Endothelial cell of umbilical vein (primary cell): ENCODE measurements at regions of chr14 and their contacts with region 1.

Region 1: DNA sequence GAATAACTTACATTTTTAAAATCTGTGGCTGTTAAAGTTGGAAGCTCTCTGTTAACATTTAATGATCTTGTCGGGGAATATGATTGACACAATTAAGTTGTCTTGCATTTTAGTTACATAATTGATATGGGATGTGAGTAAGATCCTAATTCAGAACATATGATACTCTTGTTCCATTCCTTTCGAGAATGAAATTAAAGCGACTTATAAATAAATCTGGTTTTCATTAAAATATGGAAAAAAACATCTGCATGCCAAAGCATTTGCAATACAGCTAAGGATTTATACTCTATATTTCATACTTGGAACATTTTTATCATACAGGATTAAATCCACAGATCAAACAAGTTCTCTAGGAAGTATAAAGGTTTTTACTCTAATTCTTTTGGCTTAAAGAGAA is 52.0 kb downstream of the SLC38A6 start:
- DNase-seq: no peak
- H3K4me3 ChIP-seq: no peak overlapping the region
- H3K27ac ChIP-seq: no peak overlapping the region
- H3K4me1 ChIP-seq: peaks cover 3% of the 10 kb centered on the region
- H3K27me3 ChIP-seq: no peaks in the 10 kb centered on the region
- CTCF ChIP-seq: no peak
- POLR2A ChIP-seq: no peak

Region 2: DNA sequence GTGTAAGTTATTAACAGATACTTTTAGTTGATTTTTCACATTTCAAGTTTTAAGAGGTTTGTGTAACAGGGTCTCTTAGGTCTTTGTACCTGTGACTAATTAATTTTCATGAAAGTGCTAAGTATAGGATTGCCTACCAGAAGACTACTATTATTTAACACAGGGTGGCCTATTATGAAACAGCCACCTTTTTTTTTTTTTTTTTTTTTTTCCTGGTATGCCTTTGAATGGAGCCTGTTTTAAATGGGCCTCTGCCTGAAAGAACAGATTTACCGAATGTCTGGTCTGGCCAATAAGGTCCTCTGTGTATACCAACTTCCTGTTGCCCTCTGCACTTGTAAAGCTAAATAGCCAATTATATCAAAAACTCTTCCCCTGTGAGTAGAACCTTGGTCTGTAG is 10.5 kb after region 1 on chr14:
- CTCF ChIA-PET with region 1: interaction called, 12 read pairs
- POLR2A ChIA-PET with region 1: no interaction called
- dilution Hi-C with region 1: no loop called
- intact Hi-C with region 1: no loop called
- DNase-seq: no peak
- H3K4me3 ChIP-seq: no peak overlapping the region
- H3K27ac ChIP-seq: no peak overlapping the region
- H3K4me1 ChIP-seq: no peaks in the 10 kb centered on the region
- H3K27me3 ChIP-seq: no peaks in the 10 kb centered on the region
- CTCF ChIP-seq: no peak
- POLR2A ChIP-seq: no peak